ENCODE measurements at regions of chr9 and their contacts with region 1.

Region 1: DNA sequence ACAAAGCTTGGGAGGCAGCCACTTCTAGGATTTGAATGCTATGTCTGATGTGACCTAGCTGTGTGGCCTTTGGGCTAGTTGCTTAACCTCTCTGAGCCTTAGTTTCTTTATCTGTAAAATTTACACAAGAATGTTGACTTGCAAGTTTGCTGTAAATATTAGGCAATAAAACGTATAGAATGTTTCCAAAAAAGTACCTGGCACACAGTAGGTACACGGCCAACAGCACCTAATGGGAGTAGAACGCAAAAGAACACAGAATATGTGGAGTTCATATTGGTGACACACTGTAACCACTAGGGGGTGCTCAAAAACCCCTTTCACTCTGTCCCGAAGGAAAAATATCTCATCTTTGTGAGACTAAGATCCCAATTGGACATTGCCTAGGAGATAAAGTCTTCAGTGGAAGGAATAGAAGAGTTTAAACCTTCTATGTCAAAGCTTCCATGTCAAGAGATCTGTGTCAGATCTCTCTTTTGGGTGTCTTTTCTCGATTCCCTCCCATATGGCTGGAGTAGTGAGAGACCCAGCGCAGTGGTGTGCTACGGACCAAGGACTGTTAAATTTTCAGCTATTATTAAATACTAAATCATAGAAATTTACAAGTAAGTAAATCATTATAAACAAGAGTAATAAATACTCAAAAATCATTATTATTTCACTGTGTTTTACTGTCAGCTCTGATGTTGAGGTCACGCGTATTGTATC is 145.4 kb upstream of the RAD23B start:
- DNase-seq: peak; percentile 17
- H3K4me3 Mint-ChIP-seq: no peak overlapping the region
- H3K27ac Mint-ChIP-seq: no peak overlapping the region
- H3K4me1 Mint-ChIP-seq: no peaks in the 10 kb centered on the region
- H3K27me3 Mint-ChIP-seq: peaks cover 68% of the 10 kb centered on the region
- CTCF ChIP-seq: peak; percentile 24

Region 2: GRCh38 chr9:106119176-106119575 is 1018.5 kb before region 1 on chr9:
- CTCF ChIA-PET with region 1: no interaction called
- intact Hi-C with region 1: no loop called
- DNase-seq: no peak
- H3K4me3 Mint-ChIP-seq: no peak overlapping the region
- H3K27ac Mint-ChIP-seq: no peak overlapping the region
- H3K4me1 Mint-ChIP-seq: no peaks in the 10 kb centered on the region
- H3K27me3 Mint-ChIP-seq: no peaks in the 10 kb centered on the region
- CTCF ChIP-seq: no peak

Region 3: DNA sequence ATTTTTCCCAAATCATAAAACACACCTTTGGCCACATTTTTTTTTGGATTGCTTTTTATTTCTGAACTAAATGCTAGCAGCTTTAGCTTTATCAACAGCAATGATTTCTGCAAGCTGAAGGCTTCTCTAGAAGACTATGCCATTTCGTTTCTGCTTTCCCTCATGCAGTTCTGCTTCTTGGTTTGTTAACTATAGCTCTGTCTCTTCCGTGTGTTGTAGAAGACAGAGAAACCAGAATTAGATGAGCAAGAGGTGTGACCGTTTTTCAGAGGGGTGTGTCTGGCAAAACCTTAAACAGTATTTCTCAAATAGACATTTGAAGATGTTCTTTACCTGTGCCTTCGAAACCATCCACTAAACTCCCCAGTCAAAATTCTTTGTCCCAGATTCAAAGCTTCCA is 143.2 kb before region 1 on chr9:
- CTCF ChIA-PET with region 1: no interaction called
- intact Hi-C with region 1: no loop called
- DNase-seq: no peak
- H3K4me3 Mint-ChIP-seq: no peak overlapping the region
- H3K27ac Mint-ChIP-seq: no peak overlapping the region
- H3K4me1 Mint-ChIP-seq: no peaks in the 10 kb centered on the region
- H3K27me3 Mint-ChIP-seq: no peaks in the 10 kb centered on the region
- CTCF ChIP-seq: no peak

Region 4: GRCh38 chr9:107172160-107172978 is 34.7 kb after region 1 on chr9:
- CTCF ChIA-PET with region 1: interaction called, 4 read pairs
- intact Hi-C with region 1: loop called (anchors 2 kb)
- DNase-seq: peak; percentile 71
- H3K4me3 Mint-ChIP-seq: no peak overlapping the region
- H3K27ac Mint-ChIP-seq: no peak overlapping the region
- H3K4me1 Mint-ChIP-seq: no peaks in the 10 kb centered on the region
- H3K27me3 Mint-ChIP-seq: peaks cover 9% of the 10 kb centered on the region
- CTCF ChIP-seq: no peak

Measured in Calu3 (cell line).